CD14-positive monocyte (primary cell): ENCODE measurements at regions of chr6 and their contacts with region 1.

Region 1: DNA sequence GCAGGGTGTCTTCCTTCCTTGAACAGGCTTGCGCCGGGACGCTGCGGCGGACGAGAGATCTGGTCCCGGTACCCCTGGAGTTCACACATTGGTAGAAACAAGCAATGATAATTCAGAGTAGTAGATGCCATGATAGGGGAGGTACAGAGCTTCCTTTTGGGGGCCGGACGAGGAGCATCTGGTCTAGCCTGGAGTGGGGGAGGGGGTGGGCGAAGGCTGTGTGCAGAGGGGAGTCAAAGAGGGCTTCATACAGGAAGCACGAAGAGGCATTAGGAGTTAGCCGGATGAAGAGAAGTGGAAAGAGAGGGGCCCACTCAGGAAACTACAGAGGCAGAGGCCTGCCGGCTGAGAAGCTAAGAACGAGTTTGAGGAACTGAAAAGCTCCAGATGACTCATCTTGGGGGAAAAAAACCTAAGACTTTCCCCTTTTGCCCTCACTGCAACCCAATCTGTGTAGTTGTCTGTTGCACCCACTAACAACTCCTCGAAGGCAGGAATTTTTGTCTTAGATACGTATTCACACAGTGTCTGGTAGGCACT is 611 bp downstream of the CNPY3 start:
- DNase-seq: peak; percentile 84 to 95 (median 93)
- H3K4me3 ChIP-seq: peak overlapping the region; percentile 72 to 99 (median 86)
- H3K4me3 Mint-ChIP-seq: peak overlapping the region; percentile 99
- H3K27ac ChIP-seq: peak overlapping the region; percentile 93 to 97
- H3K27ac Mint-ChIP-seq: peak overlapping the region; percentile 98 to 100 (median 99)
- H3K4me1 ChIP-seq: peaks cover 62 to 70% of the 10 kb centered on the region in 2 donors
- H3K4me1 Mint-ChIP-seq: peaks cover 59% of the 10 kb centered on the region
- H3K27me3 ChIP-seq: no peaks in the 10 kb centered on the region
- H3K27me3 Mint-ChIP-seq: peaks cover 1 to 3% (median 2%) of the 10 kb centered on the region in 3 donors
- CTCF ChIP-seq: no peak

Region 2: DNA sequence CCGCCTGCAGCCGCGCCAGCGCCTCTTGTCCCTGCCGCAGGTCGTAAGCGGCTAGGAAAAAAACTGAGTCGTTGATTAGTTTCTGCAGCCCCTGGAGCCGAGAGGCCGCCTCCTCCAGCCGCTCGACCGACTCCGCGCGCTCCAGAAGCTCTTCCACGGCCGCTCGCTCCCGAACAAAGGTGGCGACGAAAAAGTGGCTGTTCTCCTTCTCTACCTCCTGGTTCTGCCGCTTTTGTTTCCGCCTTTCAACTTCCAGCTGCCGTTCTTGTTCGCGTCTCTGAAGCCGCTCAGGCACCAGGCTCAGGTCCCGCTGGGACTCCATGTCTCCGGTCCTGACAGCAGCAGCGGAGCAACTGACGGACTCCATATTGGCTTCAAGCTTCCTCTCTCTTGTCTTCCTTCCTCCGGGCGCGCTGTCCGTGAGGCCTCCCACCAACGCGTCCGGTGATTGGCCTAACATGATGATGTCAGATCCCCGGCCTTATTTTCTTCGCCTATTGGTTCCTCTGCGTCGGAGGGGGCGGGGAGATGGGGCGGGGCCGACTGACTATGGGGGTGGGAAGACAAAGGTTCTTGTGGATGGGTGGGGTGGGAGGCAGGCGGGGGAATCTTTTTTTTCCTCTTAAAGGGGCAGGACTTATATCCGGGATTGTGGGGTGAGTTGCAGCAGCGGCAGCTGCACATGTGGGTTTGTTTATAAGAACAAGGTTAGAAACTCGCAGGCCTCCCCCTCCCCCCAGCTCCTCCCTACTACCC is 184.0 kb before region 1 on chr6 and contains the start of gene TBCC:
- intact Hi-C with region 1: loop called in 1 of 2 experiments (anchors 5 kb)
- DNase-seq: peak; percentile 97
- H3K4me3 ChIP-seq: peak within 1 kb of the TSS; percentile 83 to 99 (median 97)
- H3K4me3 Mint-ChIP-seq: peak within 1 kb of the TSS; percentile 100
- H3K27ac ChIP-seq: peak within 1 kb of the TSS; percentile 79 to 97
- H3K27ac Mint-ChIP-seq: peak within 1 kb of the TSS; percentile 95 to 100 (median 100)
- H3K4me1 ChIP-seq: peaks cover 18 to 30% of the 10 kb centered on the region in 2 donors
- H3K4me1 Mint-ChIP-seq: peaks cover 35% of the 10 kb centered on the region
- H3K27me3 ChIP-seq: no peaks in the 10 kb centered on the region
- H3K27me3 Mint-ChIP-seq: no peaks in the 10 kb centered on the region
- CTCF ChIP-seq: no peak
- polyA plus RNA-seq, gene TBCC: 19.3 to 31.3 (median 30.7) TPM

Region 3: GRCh38 chr6:42890311-42891198 is 39.3 kb before region 1 on chr6:
- intact Hi-C with region 1: no loop called
- DNase-seq: peak; percentile 85 to 87 (median 87)
- H3K4me3 ChIP-seq: peak overlapping the region; percentile 91 to 98 (median 93)
- H3K4me3 Mint-ChIP-seq: peak overlapping the region; percentile 94 to 97
- H3K27ac ChIP-seq: peak overlapping the region; percentile 85 to 91
- H3K27ac Mint-ChIP-seq: peak overlapping the region; percentile 87 to 95 (median 93)
- H3K4me1 ChIP-seq: peaks cover 27 to 36% of the 10 kb centered on the region in 2 donors
- H3K4me1 Mint-ChIP-seq: peaks cover 30% of the 10 kb centered on the region
- H3K27me3 ChIP-seq: no peaks in the 10 kb centered on the region
- H3K27me3 Mint-ChIP-seq: no peaks in the 10 kb centered on the region
- CTCF ChIP-seq: no peak

Region 4: DNA sequence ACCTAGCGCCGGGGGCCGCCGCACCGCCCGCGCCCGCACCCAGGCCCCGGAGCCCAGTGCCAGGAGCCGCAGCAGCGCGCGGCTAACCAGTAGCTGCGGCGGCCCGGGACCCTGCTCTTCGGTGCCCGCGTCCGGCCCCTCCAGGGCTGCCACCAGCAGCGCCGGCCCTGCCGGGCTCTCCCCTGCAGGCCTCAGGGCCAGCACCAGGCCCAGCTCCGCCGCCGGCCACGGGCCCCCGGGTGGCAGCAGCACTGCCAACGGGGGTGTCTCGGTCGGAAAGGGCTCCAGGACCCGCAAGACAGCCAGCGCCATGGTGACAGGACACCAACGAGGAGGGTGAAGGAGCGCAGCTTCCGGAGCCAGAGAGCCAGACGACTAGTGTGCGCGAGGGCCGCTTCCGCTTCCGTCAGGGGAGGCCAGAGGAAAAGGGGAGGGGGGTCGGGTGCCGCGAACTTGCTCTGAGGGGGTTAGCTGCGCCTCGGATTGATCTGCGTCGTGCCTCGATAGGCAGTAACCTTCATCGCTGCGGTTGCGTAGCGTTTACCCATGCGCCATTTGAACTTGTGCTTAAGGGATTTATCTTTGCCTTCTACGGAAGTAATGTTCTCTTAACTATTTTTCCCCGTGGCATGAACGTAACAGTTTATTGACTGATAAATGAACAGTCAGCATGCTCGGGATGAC is 49.1 kb after region 1 on chr6 and contains the start of gene PEX6:
- intact Hi-C with region 1: loop called (anchors 5 kb)
- DNase-seq: peak; percentile 72 to 84 (median 82)
- H3K4me3 ChIP-seq: peak within 1 kb of the TSS; percentile 70 to 92 (median 91)
- H3K4me3 Mint-ChIP-seq: peak within 1 kb of the TSS; percentile 94 to 96
- H3K27ac ChIP-seq: peak within 1 kb of the TSS; percentile 47 to 93
- H3K27ac Mint-ChIP-seq: peak within 1 kb of the TSS; percentile 89 to 96 (median 93)
- H3K4me1 ChIP-seq: peaks cover 28 to 31% of the 10 kb centered on the region in 2 donors
- H3K4me1 Mint-ChIP-seq: peaks cover 35% of the 10 kb centered on the region
- H3K27me3 ChIP-seq: no peaks in the 10 kb centered on the region
- H3K27me3 Mint-ChIP-seq: no peaks in the 10 kb centered on the region
- CTCF ChIP-seq: no peak
- polyA plus RNA-seq, gene PEX6: 10.6 to 16.2 (median 15.5) TPM